Activated CD4-positive, alpha-beta T cell treated with anti-CD3 and anti-CD28 coated beads for 36 hours (primary cell): ENCODE measurements at regions of chr18 and their contacts with region 1.

Region 1: DNA sequence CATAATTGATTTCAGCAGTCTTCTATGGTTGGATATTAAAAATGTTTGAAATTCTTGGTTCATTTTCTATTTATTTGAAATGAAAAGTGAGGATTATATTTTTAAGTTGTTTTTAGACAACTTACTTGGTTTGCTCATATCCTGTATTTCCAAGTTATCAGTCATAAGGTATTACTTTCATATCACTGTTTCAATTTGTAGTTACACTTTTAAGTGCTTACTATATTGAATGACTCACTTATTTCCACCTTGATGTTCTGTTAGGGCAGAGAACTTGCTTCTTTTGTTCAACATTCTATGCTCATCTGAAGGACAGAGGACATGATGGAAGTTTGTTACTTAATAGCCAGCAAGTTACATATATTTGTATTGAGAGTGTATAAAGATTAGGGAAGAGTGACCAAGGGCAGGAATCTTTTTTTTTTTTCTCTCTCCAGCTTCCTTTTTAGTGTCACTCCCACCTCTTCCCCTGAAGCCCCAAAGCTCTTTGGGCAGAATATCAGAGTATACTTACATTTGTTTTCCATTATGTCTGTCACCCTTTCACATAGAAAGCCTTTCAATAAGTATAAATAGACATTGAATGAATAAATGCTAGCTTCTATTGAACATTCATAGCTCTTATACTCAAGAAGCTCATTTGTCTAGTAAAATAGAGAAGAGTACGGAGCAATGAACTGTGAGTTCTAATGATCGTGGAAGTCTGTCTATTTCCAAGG is 28.1 kb downstream of the PIK3C3 start:
- DNase-seq: no peak
- ATAC-seq: peak; percentile 94
- H3K4me3 Mint-ChIP-seq: peak overlapping the region; percentile 13
- H3K27ac Mint-ChIP-seq: peak overlapping the region; percentile 89
- H3K4me1 Mint-ChIP-seq: peaks cover 29% of the 10 kb centered on the region
- H3K27me3 Mint-ChIP-seq: no peaks in the 10 kb centered on the region

Region 2: GRCh38 chr18:41949206-41949920 is 33.7 kb before region 1 on chr18:
- CTCF ChIA-PET with region 1: no interaction called
- POLR2A ChIA-PET with region 1: no interaction called
- intact Hi-C with region 1: loop called in 1 of 2 experiments (anchors 1 kb)
- DNase-seq: no peak
- ATAC-seq: no peak
- H3K4me3 Mint-ChIP-seq: no peak overlapping the region
- H3K27ac Mint-ChIP-seq: no peak overlapping the region
- H3K4me1 Mint-ChIP-seq: peaks cover 13% of the 10 kb centered on the region
- H3K27me3 Mint-ChIP-seq: peaks cover 19% of the 10 kb centered on the region

Region 3: GRCh38 chr18:41954827-41955613 is 28.1 kb before region 1 on chr18 and contains the start of gene PIK3C3:
- CTCF ChIA-PET with region 1: interaction called, 3 read pairs
- POLR2A ChIA-PET with region 1: no interaction called
- intact Hi-C with region 1: loop called (anchors 1 to 2 kb)
- DNase-seq: peak; percentile 98
- ATAC-seq: peak; percentile 97
- H3K4me3 Mint-ChIP-seq: peak within 1 kb of the TSS; percentile 98
- H3K27ac Mint-ChIP-seq: peak within 1 kb of the TSS; percentile 99
- H3K4me1 Mint-ChIP-seq: peaks cover 26% of the 10 kb centered on the region
- H3K27me3 Mint-ChIP-seq: no peaks in the 10 kb centered on the region
- total RNA-seq, gene PIK3C3: 37.5 to 51.7 TPM

Region 4: DNA sequence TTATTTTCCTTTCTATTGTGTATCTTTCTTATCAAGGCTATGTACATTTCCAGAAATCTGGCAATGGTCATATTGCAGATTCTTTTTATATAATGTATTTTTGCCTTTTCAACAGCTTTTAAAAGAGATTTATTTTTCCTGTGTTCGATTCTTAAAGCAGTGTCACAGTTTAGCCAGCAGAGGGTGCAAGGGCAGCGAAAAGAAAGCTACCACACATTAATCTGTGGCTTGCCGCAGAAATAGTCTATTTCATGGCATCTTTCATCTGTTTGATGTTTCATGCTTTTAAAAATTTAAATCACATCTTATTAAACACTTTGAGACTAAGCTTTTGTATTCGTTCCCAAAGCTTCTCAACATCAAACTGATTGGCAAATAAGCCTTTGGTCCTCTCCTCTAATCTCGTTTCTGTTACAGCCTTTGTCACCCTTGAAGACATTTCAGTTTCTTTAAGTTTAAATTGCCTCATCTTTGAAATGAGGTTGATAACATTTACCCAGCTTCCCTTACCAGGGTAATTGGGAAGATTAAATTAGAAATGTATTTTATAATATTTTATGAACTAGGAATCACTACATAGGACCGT is 45.2 kb after region 1 on chr18:
- CTCF ChIA-PET with region 1: interaction called, 11 read pairs
- POLR2A ChIA-PET with region 1: no interaction called
- intact Hi-C with region 1: loop called (anchors 1 to 2 kb)
- DNase-seq: peak; percentile 47
- ATAC-seq: no peak
- H3K4me3 Mint-ChIP-seq: no peak overlapping the region
- H3K27ac Mint-ChIP-seq: no peak overlapping the region
- H3K4me1 Mint-ChIP-seq: peaks cover 28% of the 10 kb centered on the region
- H3K27me3 Mint-ChIP-seq: no peaks in the 10 kb centered on the region